BJ (cell line): ENCODE measurements at regions of chr2 and their contacts with region 1.

Region 1: GRCh38 chr2:33412920-33413319 is 63.5 kb upstream of the RASGRP3 start:
- DNase-seq: no peak
- H3K4me3 ChIP-seq: no peak overlapping the region
- H3K27me3 ChIP-seq: no peaks in the 10 kb centered on the region
- CTCF ChIP-seq: peak; percentile 47

Region 2: DNA sequence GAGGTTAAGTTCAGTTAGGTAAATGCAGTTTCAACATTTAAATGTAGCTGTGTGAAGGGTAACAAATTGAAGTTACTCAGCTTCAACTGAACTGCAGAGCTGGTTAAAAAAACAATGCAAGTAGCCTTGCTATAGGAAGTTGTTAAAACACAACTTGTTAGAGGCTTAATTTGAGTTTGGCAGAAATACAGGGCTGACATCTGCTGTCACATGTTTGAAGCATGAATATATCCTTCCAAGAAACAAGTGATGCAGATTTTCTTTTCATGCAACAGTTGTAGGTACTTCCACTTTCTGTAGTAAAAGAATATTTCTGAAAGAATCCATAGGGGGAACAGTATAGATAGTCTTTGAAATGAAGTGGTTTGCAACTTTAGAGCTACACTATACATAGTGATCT is 145.2 kb before region 1 on chr2:
- CTCF ChIA-PET with region 1: no interaction called
- POLR2A ChIA-PET with region 1: no interaction called
- DNase-seq: no peak
- H3K4me3 ChIP-seq: no peak overlapping the region
- H3K27me3 ChIP-seq: no peaks in the 10 kb centered on the region
- CTCF ChIP-seq: no peak

Region 3: DNA sequence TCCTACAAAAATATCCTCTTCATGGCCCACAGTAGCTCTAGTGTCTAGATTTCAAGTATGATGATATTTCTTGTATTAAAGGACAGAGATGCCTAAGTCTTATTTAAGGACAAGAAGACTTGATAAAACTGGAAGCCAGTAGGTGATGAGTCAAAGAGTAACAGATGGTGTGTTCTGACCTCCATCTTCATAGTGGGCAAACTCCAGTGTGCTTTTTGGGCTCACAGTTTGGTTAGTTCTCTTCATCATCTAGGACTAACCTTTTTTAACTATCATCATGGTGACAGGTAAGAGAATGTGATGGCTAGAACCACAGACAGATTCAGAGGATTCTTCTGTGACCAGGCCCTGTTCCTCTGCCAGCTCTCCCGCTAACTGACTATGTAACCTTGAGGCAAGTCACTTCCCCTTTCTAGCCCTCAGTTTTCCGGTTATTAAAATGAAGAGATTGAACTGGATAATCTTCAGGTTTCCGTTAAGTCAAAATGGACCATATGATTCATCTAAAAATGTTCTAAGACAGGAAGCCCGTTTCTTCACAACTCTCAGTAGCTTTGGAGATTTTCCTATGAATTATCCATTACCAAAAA is 76.8 kb before region 1 on chr2:
- CTCF ChIA-PET with region 1: no interaction called
- POLR2A ChIA-PET with region 1: no interaction called
- DNase-seq: no peak
- H3K4me3 ChIP-seq: no peak overlapping the region
- H3K27me3 ChIP-seq: no peaks in the 10 kb centered on the region
- CTCF ChIP-seq: no peak

Region 4: DNA sequence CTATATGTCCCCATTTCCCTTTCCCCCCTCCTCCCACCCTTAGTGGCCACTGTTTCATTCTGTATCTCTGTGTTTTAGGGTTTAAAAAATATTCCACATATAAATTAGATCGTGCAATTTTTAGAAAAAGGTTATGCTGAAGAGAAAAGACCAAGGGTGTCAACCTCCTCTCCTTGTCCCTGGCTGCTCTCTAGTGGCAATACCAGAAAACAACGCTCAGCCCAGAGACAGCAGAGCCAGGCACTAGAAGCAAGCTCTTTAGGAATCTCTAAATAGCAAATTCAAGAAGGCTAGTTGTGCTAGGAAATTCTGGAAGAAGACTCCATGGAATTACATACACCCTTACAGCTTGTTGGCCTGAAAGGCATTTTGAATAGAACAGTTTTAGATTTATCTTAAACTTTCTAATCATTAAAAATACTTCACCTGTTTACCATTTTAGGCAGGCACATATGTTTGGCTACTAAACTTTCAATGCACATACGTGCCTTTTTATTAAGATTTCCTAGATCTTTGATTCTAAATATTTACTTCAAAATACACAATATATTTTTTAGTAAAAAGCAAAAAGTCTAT is 28.4 kb after region 1 on chr2:
- CTCF ChIA-PET with region 1: interaction called, 25 read pairs
- POLR2A ChIA-PET with region 1: interaction called, 3 read pairs
- DNase-seq: no peak
- H3K4me3 ChIP-seq: no peak overlapping the region
- H3K27me3 ChIP-seq: no peaks in the 10 kb centered on the region
- CTCF ChIP-seq: peak; percentile 87